ENCODE measurements at regions of chr4 and their contacts with region 1.

Region 1: GRCh38 chr4:72326692-72327632 is 242.1 kb downstream of the ADAMTS3 start:
- DNase-seq: no peak
- H3K4me3 Mint-ChIP-seq: no peak overlapping the region
- H3K27ac Mint-ChIP-seq: no peak overlapping the region
- H3K4me1 Mint-ChIP-seq: peaks cover 23% of the 10 kb centered on the region
- H3K27me3 Mint-ChIP-seq: no peaks in the 10 kb centered on the region
- CTCF ChIP-seq: peak; percentile 26

Region 2: DNA sequence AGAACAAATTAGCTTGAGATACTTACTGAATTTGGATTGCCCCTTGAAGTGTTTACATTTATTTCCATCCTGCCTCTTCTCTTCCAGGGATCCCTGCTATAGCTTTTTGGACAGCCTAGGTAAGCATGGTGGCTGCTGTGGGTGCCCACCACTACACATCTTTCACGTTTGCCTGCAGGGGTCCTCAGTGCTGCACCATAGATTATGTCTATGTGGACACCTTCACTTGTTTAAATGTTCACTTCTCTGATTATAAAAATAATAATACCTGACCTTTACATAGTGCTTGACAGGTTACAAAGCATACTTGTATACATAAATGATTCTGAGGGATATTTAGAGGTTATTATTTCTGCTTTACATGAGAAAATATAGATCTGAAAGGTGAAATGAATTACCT is 1056.1 kb before region 1 on chr4:
- CTCF ChIA-PET with region 1: interaction called, 10 read pairs
- intact Hi-C with region 1: no loop called
- DNase-seq: peak; percentile 63
- H3K4me3 Mint-ChIP-seq: no peak overlapping the region
- H3K27ac Mint-ChIP-seq: no peak overlapping the region
- H3K4me1 Mint-ChIP-seq: peaks cover 17% of the 10 kb centered on the region
- H3K27me3 Mint-ChIP-seq: no peaks in the 10 kb centered on the region
- CTCF ChIP-seq: peak; percentile 40

Region 3: DNA sequence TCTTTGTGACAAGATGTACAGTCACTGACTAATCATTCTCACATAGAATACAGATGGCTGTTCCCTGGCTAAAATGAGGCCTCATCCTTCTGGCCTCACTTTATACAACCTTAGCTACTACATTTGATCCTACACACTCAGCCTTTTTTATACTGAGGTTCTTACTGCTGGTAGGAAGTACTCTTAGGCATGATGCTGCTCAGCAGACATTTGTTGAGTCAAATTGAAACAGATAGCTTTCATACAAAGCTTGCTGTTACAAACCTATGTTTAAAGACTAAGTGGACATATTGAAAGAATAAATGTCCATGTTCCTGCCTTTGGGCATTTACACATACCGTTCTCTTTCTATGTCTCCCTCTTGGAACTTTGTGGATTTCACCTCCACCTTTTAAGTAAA is 140.2 kb before region 1 on chr4:
- CTCF ChIA-PET with region 1: no interaction called
- intact Hi-C with region 1: no loop called
- DNase-seq: no peak
- H3K4me3 Mint-ChIP-seq: no peak overlapping the region
- H3K27ac Mint-ChIP-seq: no peak overlapping the region
- H3K4me1 Mint-ChIP-seq: peaks cover 17% of the 10 kb centered on the region
- H3K27me3 Mint-ChIP-seq: no peaks in the 10 kb centered on the region
- CTCF ChIP-seq: no peak

Region 4: DNA sequence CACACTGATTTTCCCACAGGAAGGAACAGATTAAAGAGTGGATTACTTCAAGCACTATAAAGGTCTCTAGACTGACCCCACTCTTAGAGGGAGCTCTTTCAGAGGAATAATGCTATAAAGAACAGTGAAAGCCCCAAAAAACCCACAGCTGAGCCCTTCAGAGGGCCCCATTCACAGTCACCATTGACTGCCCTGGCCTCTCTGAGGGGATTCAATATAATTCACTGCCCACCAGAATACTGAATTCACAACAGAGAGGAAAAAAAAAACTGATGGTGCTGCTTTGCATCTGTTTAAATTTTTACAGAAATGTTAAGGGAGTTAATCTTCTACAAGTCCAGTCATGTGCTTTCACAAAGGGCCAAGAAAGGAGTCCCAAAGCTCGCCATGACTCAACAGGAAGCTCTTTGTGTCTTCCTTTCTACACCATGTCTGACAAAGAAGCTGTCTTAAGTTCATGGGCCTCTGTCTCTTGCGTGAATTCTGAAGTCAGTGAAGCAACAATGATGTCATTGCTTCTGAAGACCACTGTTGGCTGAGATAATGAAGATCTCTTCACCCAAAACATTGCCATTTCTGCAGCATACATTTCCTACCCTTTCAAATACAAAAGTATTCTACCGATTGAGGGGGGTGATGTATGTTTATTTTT is 67.2 kb after region 1 on chr4:
- CTCF ChIA-PET with region 1: no interaction called
- intact Hi-C with region 1: no loop called
- DNase-seq: no peak
- H3K4me3 Mint-ChIP-seq: no peak overlapping the region
- H3K27ac Mint-ChIP-seq: no peak overlapping the region
- H3K4me1 Mint-ChIP-seq: no peaks in the 10 kb centered on the region
- H3K27me3 Mint-ChIP-seq: no peaks in the 10 kb centered on the region
- CTCF ChIP-seq: no peak

Region 5: DNA sequence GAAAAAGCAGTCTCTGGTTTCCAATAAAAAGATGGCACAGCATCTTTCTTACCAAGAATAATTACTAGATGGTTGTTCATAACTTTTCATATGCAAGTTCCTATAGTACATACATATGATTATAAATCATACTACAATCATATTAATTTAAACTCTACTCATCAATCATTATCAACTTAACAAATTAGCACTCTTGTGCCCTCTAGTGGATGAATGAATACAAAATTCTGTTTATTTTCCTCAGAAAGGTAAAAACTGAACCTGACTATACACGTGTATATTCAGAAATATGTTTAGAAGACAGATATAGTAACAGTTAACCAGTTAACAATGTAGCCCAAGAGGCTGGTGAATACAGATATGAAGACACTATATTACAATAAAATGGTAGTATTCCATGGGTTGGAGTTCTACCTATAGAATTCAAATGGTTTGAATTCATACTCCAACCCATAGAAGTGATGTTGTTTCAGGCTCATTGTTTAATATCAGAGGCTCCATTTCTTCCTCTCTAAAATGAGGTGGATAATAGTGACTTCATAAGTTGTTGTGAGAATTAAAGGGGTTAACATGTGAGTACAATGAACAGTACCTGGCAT is 142.0 kb after region 1 on chr4:
- CTCF ChIA-PET with region 1: interaction called, 4 read pairs
- intact Hi-C with region 1: loop called (anchors 2 kb)
- DNase-seq: no peak
- H3K4me3 Mint-ChIP-seq: no peak overlapping the region
- H3K27ac Mint-ChIP-seq: peak overlapping the region; percentile 65
- H3K4me1 Mint-ChIP-seq: no peaks in the 10 kb centered on the region
- H3K27me3 Mint-ChIP-seq: no peaks in the 10 kb centered on the region
- CTCF ChIP-seq: peak; percentile 20

Region 6: DNA sequence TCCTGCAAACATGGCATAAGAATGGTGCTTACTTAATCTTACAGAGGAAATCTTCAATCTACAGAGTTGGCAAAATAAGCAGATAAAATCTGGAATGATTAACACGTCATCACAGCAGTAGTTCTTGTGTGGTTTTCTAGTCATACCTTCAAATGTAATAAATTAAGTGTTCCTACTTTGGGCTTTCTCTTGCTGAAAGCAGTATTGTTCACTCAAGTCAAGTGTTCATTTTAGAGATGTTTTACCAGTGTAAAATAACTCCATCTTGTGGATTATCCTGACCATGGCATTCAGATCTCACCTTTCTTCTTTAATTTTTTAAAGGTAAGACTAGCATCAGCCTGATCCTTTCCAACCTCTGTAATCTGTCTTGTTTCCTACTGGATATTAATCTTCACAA is 169.2 kb after region 1 on chr4:
- CTCF ChIA-PET with region 1: interaction called, 5 read pairs
- intact Hi-C with region 1: loop called (anchors 10 kb)
- DNase-seq: no peak
- H3K4me3 Mint-ChIP-seq: no peak overlapping the region
- H3K27ac Mint-ChIP-seq: no peak overlapping the region
- H3K4me1 Mint-ChIP-seq: no peaks in the 10 kb centered on the region
- H3K27me3 Mint-ChIP-seq: no peaks in the 10 kb centered on the region
- CTCF ChIP-seq: no peak

Measured in Calu3 (cell line).